Activated T-helper 1 cell treated with anti-CD3 and anti-CD28 coated beads, Interleukin-12 subunit alpha, Interleukin-12 subunit beta, Interleukin-2, Interleukin-4 antibody, amounts not matched to agents 30 ng/mL and 10 ng/mL and 1 ng/mL, durations not matched to agents 14 hours and 24 hours and 36 hours (primary cell): ENCODE measurements at regions of chr17 and their contacts with region 1.

Region 1: GRCh38 chr17:78840725-78841611 is at the start of gene USP36:
- DNase-seq: peak; percentile 99
- H3K4me3 Mint-ChIP-seq: peak within 1 kb of the TSS; percentile 94
- H3K27ac Mint-ChIP-seq: peak within 1 kb of the TSS; percentile 93
- H3K4me1 Mint-ChIP-seq: peaks cover 43% of the 10 kb centered on the region
- H3K27me3 Mint-ChIP-seq: no peaks in the 10 kb centered on the region
- total RNA-seq, gene USP36: 126 and 138 TPM in 2 replicates

Region 2: GRCh38 chr17:78497115-78497540 is 343.8 kb before region 1 on chr17:
- intact Hi-C with region 1: loop called (anchors 1 kb)
- DNase-seq: peak; percentile 30
- H3K4me3 Mint-ChIP-seq: no peak overlapping the region
- H3K27ac Mint-ChIP-seq: no peak overlapping the region
- H3K4me1 Mint-ChIP-seq: no peaks in the 10 kb centered on the region
- H3K27me3 Mint-ChIP-seq: peaks cover 2% of the 10 kb centered on the region

Region 3: DNA sequence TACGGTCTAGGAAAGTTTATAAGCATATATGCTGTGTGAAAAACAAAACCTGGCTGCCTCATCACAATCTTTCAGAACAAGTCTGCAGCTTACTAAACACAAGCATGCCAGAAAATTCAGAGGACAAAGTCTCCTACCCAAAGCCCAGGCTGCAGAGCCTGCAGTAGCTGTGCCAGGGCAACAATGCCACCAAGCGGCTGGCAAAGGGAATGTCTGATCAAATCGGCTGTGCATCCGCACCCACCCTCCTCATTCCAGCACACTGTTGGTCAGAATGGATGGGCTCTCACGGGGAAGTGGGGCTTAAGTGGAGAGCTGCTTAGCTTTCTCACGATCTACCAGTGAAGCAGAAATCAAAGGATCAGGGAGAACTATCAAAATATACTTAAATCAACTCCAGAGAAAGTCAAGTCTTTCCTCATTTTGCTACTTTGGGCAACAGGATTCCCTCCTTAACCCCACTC is 132.4 kb before region 1 on chr17:
- intact Hi-C with region 1: no loop called
- DNase-seq: peak; percentile 35
- H3K4me3 Mint-ChIP-seq: peak overlapping the region; percentile 55
- H3K27ac Mint-ChIP-seq: peak overlapping the region; percentile 84
- H3K4me1 Mint-ChIP-seq: peaks cover 56% of the 10 kb centered on the region
- H3K27me3 Mint-ChIP-seq: no peaks in the 10 kb centered on the region

Region 4: DNA sequence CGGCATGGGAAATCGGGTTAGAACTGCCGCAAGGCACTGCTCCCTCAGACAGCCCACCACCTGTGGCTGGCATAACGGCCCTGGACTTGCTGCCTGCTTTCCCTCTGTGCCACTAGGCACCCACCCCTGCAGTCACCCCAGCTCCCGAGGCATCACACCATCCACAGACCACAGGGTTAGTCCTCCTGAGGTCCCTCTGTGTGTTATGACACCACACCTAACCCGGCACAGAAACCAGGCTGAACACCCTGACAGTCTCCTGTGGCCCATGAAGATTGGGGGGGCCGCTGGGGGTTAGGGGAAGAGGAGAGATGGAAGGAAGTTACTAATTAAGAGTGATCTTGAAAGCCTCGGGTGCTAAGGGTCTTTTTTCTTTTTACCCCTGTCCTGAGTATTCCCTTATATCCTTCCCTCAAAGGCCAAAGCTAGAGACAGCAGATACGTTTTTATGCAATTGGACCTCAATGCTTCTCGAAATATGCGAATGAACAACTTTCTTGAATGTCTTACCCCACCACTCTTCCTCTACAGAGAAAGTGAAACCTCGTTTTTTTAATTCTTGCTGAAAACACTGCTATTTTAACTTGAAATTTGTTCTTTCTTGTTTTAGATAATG is 65.9 kb before region 1 on chr17:
- intact Hi-C with region 1: loop called (anchors 2 kb)
- DNase-seq: peak; percentile 66
- H3K4me3 Mint-ChIP-seq: peak overlapping the region; percentile 90
- H3K27ac Mint-ChIP-seq: peak overlapping the region; percentile 99
- H3K4me1 Mint-ChIP-seq: peaks cover 68% of the 10 kb centered on the region
- H3K27me3 Mint-ChIP-seq: no peaks in the 10 kb centered on the region

Region 5: GRCh38 chr17:78781948-78782916 is 58.7 kb before region 1 on chr17 and contains the start of gene CYTH1:
- intact Hi-C with region 1: loop called (anchors 1 kb)
- DNase-seq: peak; percentile 96
- H3K4me3 Mint-ChIP-seq: peak within 1 kb of the TSS; percentile 90
- H3K27ac Mint-ChIP-seq: peak within 1 kb of the TSS; percentile 91
- H3K4me1 Mint-ChIP-seq: peaks cover 51% of the 10 kb centered on the region
- H3K27me3 Mint-ChIP-seq: no peaks in the 10 kb centered on the region
- total RNA-seq, gene CYTH1: 147 TPM in 2 replicates

Region 6: DNA sequence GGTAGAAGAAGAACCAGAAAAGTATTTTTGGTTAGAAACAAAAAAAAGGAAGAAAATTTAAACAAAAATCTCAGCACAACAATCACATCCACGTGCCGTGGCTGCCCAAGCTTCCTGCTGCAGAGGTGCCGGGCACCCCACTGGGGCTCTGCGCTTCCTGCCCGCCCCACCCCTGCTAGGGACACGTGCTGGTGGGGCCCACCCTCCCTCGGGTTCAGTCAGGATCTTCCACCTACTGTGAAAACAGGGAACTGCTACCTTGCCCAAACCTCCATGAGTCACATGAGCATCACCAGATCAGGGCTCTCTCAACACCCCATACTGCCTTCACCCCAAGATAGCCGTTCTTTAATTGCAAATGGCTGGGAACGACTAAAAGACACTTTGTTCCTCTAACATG is 34.5 kb before region 1 on chr17:
- intact Hi-C with region 1: loop called (anchors 5 kb)
- DNase-seq: no peak
- H3K4me3 Mint-ChIP-seq: peak overlapping the region; percentile 2
- H3K27ac Mint-ChIP-seq: peak overlapping the region; percentile 79
- H3K4me1 Mint-ChIP-seq: peaks cover 41% of the 10 kb centered on the region
- H3K27me3 Mint-ChIP-seq: no peaks in the 10 kb centered on the region

Region 7: GRCh38 chr17:78818932-78819331 is 22.0 kb before region 1 on chr17:
- intact Hi-C with region 1: loop called (anchors 1 kb)
- DNase-seq: peak; percentile 64
- H3K4me3 Mint-ChIP-seq: peak overlapping the region; percentile 74
- H3K27ac Mint-ChIP-seq: peak overlapping the region; percentile 91
- H3K4me1 Mint-ChIP-seq: peaks cover 53% of the 10 kb centered on the region
- H3K27me3 Mint-ChIP-seq: no peaks in the 10 kb centered on the region

Region 8: GRCh38 chr17:79009397-79010308 is 168.7 kb after region 1 on chr17 and contains the start of gene CANT1:
- intact Hi-C with region 1: loop called (anchors 1 kb)
- DNase-seq: peak; percentile 88
- H3K4me3 Mint-ChIP-seq: peak within 1 kb of the TSS; percentile 91
- H3K27ac Mint-ChIP-seq: peak within 1 kb of the TSS; percentile 93
- H3K4me1 Mint-ChIP-seq: peaks cover 52% of the 10 kb centered on the region
- H3K27me3 Mint-ChIP-seq: peaks cover 8% of the 10 kb centered on the region
- total RNA-seq, gene CANT1: 54.7 and 57.3 TPM in 2 replicates